Esophagus squamous epithelium (tissue), 5 donors: ENCODE measurements at regions of chr11 and their contacts with region 1.

Region 1: DNA sequence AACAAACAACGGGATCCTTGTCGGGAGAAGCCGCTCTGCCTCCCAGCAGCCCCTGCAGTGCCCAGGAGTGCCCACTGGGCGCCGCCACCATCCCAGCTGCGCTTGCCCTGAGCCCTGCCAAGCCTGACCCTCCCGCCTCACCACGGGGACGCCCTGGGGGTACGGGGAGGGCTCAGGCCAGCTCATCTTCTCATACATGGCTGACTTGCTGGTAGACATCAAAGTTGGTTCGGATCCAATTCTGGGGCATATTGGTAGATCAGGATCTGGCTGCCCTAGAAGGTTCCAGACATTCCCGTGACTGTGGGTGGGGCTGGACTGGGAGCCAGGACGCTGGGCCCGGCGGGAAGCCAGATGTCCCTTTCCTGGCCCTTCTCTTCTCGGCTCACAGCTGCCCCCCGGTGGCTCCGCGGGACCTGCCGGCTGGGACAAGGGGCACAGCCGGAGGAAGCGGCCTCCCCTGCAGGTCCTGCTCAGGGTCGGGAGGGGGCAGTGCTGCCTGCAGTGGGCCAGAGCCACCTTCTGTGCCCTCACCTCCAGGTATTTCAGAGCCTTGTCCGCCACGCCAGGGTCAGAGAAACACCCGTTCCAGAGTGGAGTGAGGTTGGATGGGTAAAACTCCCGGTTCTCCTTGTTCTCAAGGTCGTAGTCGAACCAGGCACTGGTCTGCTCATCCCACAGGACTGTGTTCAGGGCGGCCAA is 10.6 kb upstream of the TREH start:
- DNase-seq: peak; percentile 81
- H3K4me3 ChIP-seq: peak overlapping the region; percentile 27 to 66 (median 45)
- H3K27ac ChIP-seq: peak overlapping the region; percentile 64 to 84 (median 82)
- H3K4me1 ChIP-seq: peaks cover 22 to 43% (median 34%) of the 10 kb centered on the region in 3 donors
- H3K27me3 ChIP-seq: no peaks in the 10 kb centered on the region
- CTCF ChIP-seq: peak; percentile 76 to 92 (median 84)
- POLR2A ChIP-seq: no peak

Region 2: GRCh38 chr11:118789501-118790356 is 99.7 kb after region 1 on chr11:
- intact Hi-C with region 1: loop called (anchors 5 kb)
- DNase-seq: no peak
- H3K4me3 ChIP-seq: peak overlapping the region; percentile 80 to 99 (median 96)
- H3K27ac ChIP-seq: peak overlapping the region; percentile 99 to 100 (median 100)
- H3K4me1 ChIP-seq: peaks cover 5 to 67% (median 30%) of the 10 kb centered on the region in 3 donors
- H3K27me3 ChIP-seq: no peaks in the 10 kb centered on the region
- CTCF ChIP-seq: peak in 1 of 6 experiments; percentile 6
- POLR2A ChIP-seq: no peak

Region 3: GRCh38 chr11:118956094-118956846 is 266.3 kb after region 1 on chr11 and contains the start of gene UPK2:
- intact Hi-C with region 1: loop called (anchors 5 kb)
- DNase-seq: peak; percentile 14
- H3K4me3 ChIP-seq: no peak within 1 kb of the TSS
- H3K27ac ChIP-seq: no peak within 1 kb of the TSS
- H3K4me1 ChIP-seq: peaks cover 0 to 11% (median 0%) of the 10 kb centered on the region in 3 donors
- H3K27me3 ChIP-seq: peaks cover 0 to 30% (median 0%) of the 10 kb centered on the region in 4 donors
- CTCF ChIP-seq: peak; percentile 80 to 98 (median 96)
- POLR2A ChIP-seq: no peak
- total RNA-seq, gene UPK2: 0.57 TPM in 1 of 4 donors, not detected in the others

Region 4: DNA sequence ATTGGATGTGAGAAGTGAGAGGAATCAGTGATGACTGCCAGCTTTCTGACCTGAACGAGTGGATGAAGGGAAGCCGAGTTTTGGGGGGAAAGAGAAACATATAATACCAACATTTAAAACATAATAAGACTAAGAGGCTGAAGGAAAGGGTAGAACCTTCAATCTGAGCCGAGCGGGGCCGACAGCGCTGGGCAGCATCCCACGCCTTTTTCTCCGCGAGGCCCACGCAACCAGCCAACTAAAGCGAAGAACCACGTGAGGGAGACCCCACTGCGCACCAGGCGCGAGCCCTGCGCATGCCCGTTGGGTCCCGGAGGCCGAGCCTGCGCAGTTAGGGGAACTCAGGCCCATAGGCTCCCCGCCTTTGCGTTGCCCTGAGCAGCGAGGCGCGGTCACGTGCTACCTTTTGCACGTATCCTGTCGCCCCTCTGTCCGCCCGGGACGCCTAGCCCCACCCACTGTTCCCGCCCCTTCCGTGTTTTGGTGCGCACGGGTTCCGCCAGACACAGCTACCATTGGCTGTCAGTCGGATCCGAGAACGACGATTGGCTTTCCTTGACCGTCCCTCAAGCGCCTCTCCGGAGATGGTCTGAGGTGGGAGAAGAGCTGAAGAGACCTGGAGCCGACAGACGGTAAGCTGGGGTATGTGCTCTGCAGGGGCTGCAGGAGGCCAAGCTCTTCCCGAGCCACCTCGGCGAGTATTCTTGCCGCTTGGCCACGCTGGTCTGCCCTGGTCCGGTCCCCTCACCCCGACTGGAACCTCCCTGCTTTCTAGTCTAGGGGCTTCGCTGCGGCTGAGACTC is 431.2 kb after region 1 on chr11 and contains the start of gene HINFP:
- intact Hi-C with region 1: no loop called
- DNase-seq: peak; percentile 97
- H3K4me3 ChIP-seq: peak within 1 kb of the TSS; percentile 73 to 81 (median 80)
- H3K27ac ChIP-seq: peak within 1 kb of the TSS; percentile 82 to 92 (median 89)
- H3K4me1 ChIP-seq: peaks cover 13 to 28% (median 27%) of the 10 kb centered on the region in 3 donors
- H3K27me3 ChIP-seq: no peaks in the 10 kb centered on the region
- CTCF ChIP-seq: peak in 1 of 6 experiments; percentile 29
- POLR2A ChIP-seq: peak in 3 of 4 donors; percentile 54 to 66 (median 55)
- total RNA-seq, gene HINFP: 7.0 to 33.2 (median 13.9) TPM